Transverse colon (tissue), 4 donors: ENCODE measurements at regions of chr2 and their contacts with region 1.

Region 1: GRCh38 chr2:17429130-17429529 is 89.1 kb downstream of the RAD51AP2 start:
- DNase-seq: no peak
- H3K4me3 ChIP-seq: no peak overlapping the region
- H3K27ac ChIP-seq: no peak overlapping the region
- H3K4me1 ChIP-seq: no peaks in the 10 kb centered on the region
- H3K27me3 ChIP-seq: no peaks in the 10 kb centered on the region
- CTCF ChIP-seq: no peak
- EP300 ChIP-seq: no peak
- POLR2A ChIP-seq: no peak

Region 2: DNA sequence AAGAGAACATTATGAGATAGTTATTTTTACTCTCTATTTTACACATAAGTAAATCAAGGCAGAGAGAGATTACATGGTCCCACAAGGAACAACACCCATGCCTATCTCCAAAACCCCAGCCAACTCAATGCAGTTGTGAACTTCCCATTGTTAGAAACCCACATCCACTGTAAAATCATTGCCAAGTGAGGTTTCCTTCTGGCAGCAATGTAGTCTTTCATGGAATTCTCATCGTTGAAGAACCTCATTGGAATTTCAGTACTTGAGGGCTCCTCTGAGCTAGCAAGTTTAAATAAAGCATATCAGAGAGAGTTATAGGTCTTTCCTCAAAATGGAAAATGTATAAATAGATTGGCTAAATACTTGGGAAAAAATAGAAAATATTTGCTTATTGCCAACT is 16.1 kb before region 1 on chr2:
- in situ Hi-C with region 1: no loop called
- intact Hi-C with region 1: loop called (anchors 1 kb)
- DNase-seq: no peak
- H3K4me3 ChIP-seq: no peak overlapping the region
- H3K27ac ChIP-seq: no peak overlapping the region
- H3K4me1 ChIP-seq: no peaks in the 10 kb centered on the region
- H3K27me3 ChIP-seq: no peaks in the 10 kb centered on the region
- CTCF ChIP-seq: no peak
- EP300 ChIP-seq: no peak
- POLR2A ChIP-seq: no peak